SK-N-SH (cell line): ENCODE measurements at regions of chr2 and their contacts with region 1.

Region 1: GRCh38 chr2:7427293-7428060 is 510.3 kb downstream of the RNF144A start:
- DNase-seq: peak; percentile 80
- H3K4me3 ChIP-seq: no peak overlapping the region
- H3K27ac ChIP-seq: no peak overlapping the region
- H3K4me1 ChIP-seq: peaks cover 0 to 4% of the 10 kb centered on the region in 2 experiments; a peak in 2 of 4 replicates
- H3K27me3 ChIP-seq: no peaks in the 10 kb centered on the region
- CTCF ChIP-seq: peak; percentile 90
- EP300 ChIP-seq: peak in 1 of 2 experiments; percentile 11; a peak in 1 of 4 replicates
- RAD21 ChIP-seq: peak; percentile 96

Region 2: GRCh38 chr2:7097348-7097895 is 330.1 kb before region 1 on chr2:
- CTCF ChIA-PET with region 1: interaction called, 18 read pairs
- POLR2A ChIA-PET with region 1: no interaction called
- DNase-seq: peak; percentile 89
- H3K4me3 ChIP-seq: peak overlapping the region; percentile 13 to 47; a peak in 2 of 4 replicates
- H3K27ac ChIP-seq: 0 out of 4 replicates have a peak overlapping the region, but pooled peaks of 1 of the 2 experiments have one; percentile 29
- H3K4me1 ChIP-seq: peaks cover 0 to 17% of the 10 kb centered on the region in 2 experiments; a peak in 2 of 4 replicates
- H3K27me3 ChIP-seq: no peaks in the 10 kb centered on the region
- CTCF ChIP-seq: peak; percentile 100
- EP300 ChIP-seq: no peak
- RAD21 ChIP-seq: peak; percentile 98

Region 3: GRCh38 chr2:7209757-7210555 is 217.5 kb before region 1 on chr2:
- CTCF ChIA-PET with region 1: interaction called, 34 read pairs
- POLR2A ChIA-PET with region 1: no interaction called
- DNase-seq: no peak
- H3K4me3 ChIP-seq: no peak overlapping the region
- H3K27ac ChIP-seq: peak overlapping the region in 1 of 2 experiments; percentile 43; a peak in 1 of 4 replicates
- H3K4me1 ChIP-seq: peaks cover 0 to 9% of the 10 kb centered on the region in 2 experiments; a peak in 2 of 4 replicates
- H3K27me3 ChIP-seq: no peaks in the 10 kb centered on the region
- CTCF ChIP-seq: no peak
- EP300 ChIP-seq: peak in 1 of 2 experiments; percentile 86; a peak in 3 of 4 replicates
- RAD21 ChIP-seq: no peak

Region 4: GRCh38 chr2:7444626-7445025 is 17.1 kb after region 1 on chr2:
- CTCF ChIA-PET with region 1: interaction called, 41 read pairs
- POLR2A ChIA-PET with region 1: no interaction called
- DNase-seq: no peak
- H3K4me3 ChIP-seq: no peak overlapping the region
- H3K27ac ChIP-seq: no peak overlapping the region
- H3K4me1 ChIP-seq: no peaks in the 10 kb centered on the region
- H3K27me3 ChIP-seq: no peaks in the 10 kb centered on the region
- CTCF ChIP-seq: no peak
- EP300 ChIP-seq: no peak
- RAD21 ChIP-seq: no peak

Region 5: DNA sequence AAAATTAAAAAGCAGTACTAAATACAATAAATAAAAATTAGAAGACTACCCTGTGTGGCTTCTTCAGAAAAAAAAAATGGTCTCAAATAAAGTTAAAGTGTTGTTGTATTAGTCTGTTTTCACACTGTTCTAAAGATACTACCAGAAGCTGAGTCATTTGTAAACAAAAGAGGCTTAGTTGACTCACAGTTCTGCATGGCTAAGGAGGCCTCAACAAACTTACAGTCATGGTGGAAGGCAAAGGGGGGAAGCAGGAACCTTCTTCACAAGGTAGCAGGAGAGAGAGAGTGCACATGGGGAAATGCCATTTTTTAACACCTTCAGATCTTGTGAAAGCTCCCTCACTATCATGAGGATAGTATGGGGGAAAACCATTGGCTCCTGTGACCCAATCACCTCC is 102.5 kb after region 1 on chr2:
- CTCF ChIA-PET with region 1: no interaction called
- POLR2A ChIA-PET with region 1: no interaction called
- DNase-seq: no peak
- H3K4me3 ChIP-seq: no peak overlapping the region
- H3K27ac ChIP-seq: no peak overlapping the region
- H3K4me1 ChIP-seq: no peaks in the 10 kb centered on the region
- H3K27me3 ChIP-seq: no peaks in the 10 kb centered on the region
- CTCF ChIP-seq: no peak
- EP300 ChIP-seq: no peak
- RAD21 ChIP-seq: no peak

Region 6: GRCh38 chr2:7672027-7672684 is 244.7 kb after region 1 on chr2:
- CTCF ChIA-PET with region 1: interaction called, 42 read pairs
- POLR2A ChIA-PET with region 1: no interaction called
- DNase-seq: peak; percentile 49
- H3K4me3 ChIP-seq: peak overlapping the region in 1 of 2 experiments; percentile 39; a peak in 1 of 4 replicates
- H3K27ac ChIP-seq: no peak overlapping the region
- H3K4me1 ChIP-seq: no peaks in the 10 kb centered on the region; a peak in 1 of 4 replicates
- H3K27me3 ChIP-seq: no peaks in the 10 kb centered on the region
- CTCF ChIP-seq: peak; percentile 65
- EP300 ChIP-seq: no peak
- RAD21 ChIP-seq: peak; percentile 74

Region 7: DNA sequence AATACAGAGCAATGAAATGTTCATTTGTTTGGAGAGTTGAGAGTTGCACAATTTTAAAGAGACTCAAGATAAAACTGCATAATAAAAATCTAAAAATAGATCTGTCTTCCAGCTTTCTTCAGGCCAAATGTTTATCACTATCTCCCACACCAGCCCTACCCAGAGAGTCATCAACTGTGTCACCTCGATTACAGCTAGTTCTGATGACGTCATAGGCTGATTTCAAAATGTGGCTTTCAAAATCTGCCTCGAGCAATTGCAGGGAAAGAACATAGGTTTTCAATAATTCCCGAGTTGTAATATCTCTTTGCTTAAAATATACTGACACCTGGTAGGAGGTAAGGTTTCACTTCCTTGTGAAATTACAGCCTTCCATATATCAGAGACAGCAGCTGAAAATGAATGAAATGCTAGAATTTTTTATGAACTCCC is 576.8 kb after region 1 on chr2:
- CTCF ChIA-PET with region 1: interaction called, 12 read pairs
- POLR2A ChIA-PET with region 1: no interaction called
- DNase-seq: peak; percentile 81
- H3K4me3 ChIP-seq: peak overlapping the region in 1 of 2 experiments; percentile 46; a peak in 1 of 4 replicates
- H3K27ac ChIP-seq: peak overlapping the region; percentile 65 to 81
- H3K4me1 ChIP-seq: peaks cover 15% of the 10 kb centered on the region in 2 experiments; a peak in 3 of 4 replicates
- H3K27me3 ChIP-seq: no peaks in the 10 kb centered on the region
- CTCF ChIP-seq: no peak
- EP300 ChIP-seq: no peak
- RAD21 ChIP-seq: no peak